ENCODE measurements at regions of chr16 and their contacts with region 1.

Region 1: DNA sequence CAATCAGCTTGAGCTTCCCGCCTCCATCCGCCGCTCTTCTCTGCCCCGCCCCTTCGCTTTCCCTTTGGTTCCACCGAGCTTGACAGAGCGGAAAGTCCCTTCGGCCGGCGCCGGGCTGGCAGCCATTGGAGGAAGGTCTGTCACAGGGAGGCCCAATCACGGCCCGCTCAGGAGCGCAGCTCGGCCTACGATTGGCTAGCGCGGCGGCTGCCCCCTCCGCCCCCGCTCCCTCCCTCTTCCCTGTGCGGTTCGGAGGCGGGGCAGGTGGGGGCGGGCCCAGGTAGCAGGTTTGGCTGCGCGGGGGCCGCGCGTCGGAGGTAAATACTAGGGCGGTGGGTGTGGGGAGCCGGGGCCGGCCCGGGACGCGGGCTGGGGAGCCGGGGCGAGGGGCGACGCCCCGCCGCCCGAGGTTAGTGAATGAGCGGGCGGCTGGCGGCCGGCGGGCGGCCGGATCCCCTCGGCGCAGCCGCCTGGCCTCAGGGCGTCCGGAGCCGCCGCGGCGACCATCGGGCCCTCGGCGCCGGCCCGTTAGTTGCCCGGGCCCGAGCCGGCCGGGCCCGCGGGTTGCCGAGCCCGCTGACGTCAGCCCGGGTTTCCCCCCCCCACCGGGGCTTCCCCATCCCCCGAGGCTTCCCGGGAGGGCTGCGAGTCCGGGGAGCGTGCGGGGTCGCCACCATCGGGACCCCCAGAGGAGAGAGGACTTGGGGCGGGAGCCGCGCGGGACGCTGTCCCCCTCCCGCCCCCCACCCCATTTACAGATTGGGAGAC is at the start of gene CYLD:
- DNase-seq: peak; percentile 100
- ATAC-seq: peak; percentile 97
- H3K4me3 Mint-ChIP-seq: peak within 1 kb of the TSS; percentile 91
- H3K27ac Mint-ChIP-seq: peak within 1 kb of the TSS; percentile 97
- H3K4me1 Mint-ChIP-seq: peaks cover 42% of the 10 kb centered on the region
- H3K27me3 Mint-ChIP-seq: no peaks in the 10 kb centered on the region
- total RNA-seq, gene CYLD: 116 to 129 TPM

Region 2: DNA sequence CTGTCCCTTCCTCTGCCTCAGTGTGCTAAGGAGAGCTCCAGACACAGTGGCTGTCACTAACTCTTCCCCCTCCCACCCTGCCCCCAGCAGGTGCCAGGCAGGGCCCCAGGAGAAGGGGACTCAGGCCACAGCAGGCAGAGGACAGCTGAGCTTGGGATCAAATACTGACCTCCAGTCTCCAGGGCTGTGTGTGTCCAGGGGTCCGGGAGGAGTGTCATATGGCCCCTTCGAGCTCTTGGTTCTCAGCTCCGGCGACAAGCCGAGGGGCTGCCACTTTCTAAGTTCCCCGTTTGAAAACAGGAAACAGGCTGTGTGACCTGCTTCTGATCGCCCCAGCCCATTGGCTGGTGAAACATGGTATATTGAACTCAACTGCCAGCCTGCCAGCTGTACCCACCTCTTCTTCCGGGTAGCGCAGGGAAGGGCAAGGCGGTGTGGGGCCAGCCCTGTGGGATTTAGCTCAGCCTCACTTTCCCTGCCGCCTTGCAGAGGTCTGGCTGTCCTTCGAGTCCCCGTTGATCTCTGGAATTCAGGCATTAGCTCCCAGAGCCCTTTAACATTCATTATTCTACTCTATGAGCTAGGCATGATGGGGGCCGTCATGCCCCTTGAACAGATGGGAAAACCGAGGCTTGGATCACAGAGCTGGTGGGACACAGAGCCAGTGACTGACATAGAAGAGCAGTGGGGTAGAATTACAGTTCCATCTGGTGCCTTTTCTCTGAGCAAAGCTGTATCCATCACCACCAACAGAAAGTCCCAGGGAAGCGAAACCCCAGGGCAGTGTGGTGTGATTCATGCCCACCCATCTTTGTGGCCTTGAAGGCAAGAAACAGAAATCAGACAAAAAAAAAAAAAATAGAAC is 60.7 kb before region 1 on chr16 and contains the start of gene SNX20:
- CTCF ChIA-PET with region 1: interaction called, 567 read pairs
- POLR2A ChIA-PET with region 1: interaction called, 23 read pairs
- DNase-seq: peak; percentile 77
- ATAC-seq: peak; percentile 81
- H3K4me3 Mint-ChIP-seq: peak within 1 kb of the TSS; percentile 82
- H3K27ac Mint-ChIP-seq: peak within 1 kb of the TSS; percentile 89
- H3K4me1 Mint-ChIP-seq: peaks cover 84% of the 10 kb centered on the region
- H3K27me3 Mint-ChIP-seq: no peaks in the 10 kb centered on the region
- total RNA-seq, gene SNX20: 64.8 to 65.3 TPM